T-cell (primary cell): ENCODE measurements at regions of chr2 and their contacts with region 1.

Region 1: GRCh38 chr2:174546581-174547506 is 50.8 kb downstream of the WIPF1 start:
- DNase-seq: peak in 26 of 35 experiments; percentile 3 to 54 (median 21)
- ATAC-seq: peak in 3 of 4 experiments; percentile 46 to 67 (median 47)
- H3K4me3 ChIP-seq: no peak overlapping the region
- H3K4me3 Mint-ChIP-seq: peak overlapping the region in 1 of 3 donors; percentile 13
- H3K27ac ChIP-seq: no peak overlapping the region
- H3K27ac Mint-ChIP-seq: peak overlapping the region; percentile 5 to 61
- H3K4me1 ChIP-seq: peaks cover 0 to 4% of the 10 kb centered on the region in 2 experiments
- H3K4me1 Mint-ChIP-seq: peaks cover 6 to 19% (median 17%) of the 10 kb centered on the region in 3 donors
- H3K27me3 ChIP-seq: no peaks in the 10 kb centered on the region
- H3K27me3 Mint-ChIP-seq: no peaks in the 10 kb centered on the region

Region 2: DNA sequence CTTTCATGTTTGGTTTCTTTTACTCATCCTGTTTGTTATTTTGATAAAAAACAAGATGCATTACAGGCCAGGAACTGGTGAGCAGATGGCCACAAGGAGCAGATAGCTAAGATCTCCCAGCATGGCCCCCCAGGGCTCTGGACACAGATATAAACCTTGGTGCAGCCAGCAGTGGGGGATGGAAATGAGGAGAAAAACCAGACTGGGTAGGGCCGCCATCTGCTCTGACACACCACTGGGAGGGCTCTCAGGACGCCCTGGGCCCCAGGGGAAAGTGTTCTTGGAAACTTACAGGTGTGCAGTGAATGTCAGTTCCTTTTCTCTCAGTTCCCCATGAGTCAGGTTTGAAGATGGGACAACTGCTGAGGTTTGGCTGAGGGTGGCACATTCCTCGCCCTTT is 10.5 kb before region 1 on chr2:
- CTCF ChIA-PET with region 1: no interaction called
- POLR2A ChIA-PET with region 1: interaction called, 4 to 13 read pairs
- DNase-seq: no peak
- ATAC-seq: no peak
- H3K4me3 ChIP-seq: no peak overlapping the region
- H3K4me3 Mint-ChIP-seq: no peak overlapping the region
- H3K27ac ChIP-seq: no peak overlapping the region
- H3K27ac Mint-ChIP-seq: no peak overlapping the region
- H3K4me1 ChIP-seq: no peaks in the 10 kb centered on the region
- H3K4me1 Mint-ChIP-seq: peaks cover 1 to 6% (median 6%) of the 10 kb centered on the region in 3 donors
- H3K27me3 ChIP-seq: peaks cover 0 to 15% of the 10 kb centered on the region in 2 experiments
- H3K27me3 Mint-ChIP-seq: peaks cover 0 to 5% of the 10 kb centered on the region in 2 donors